Caco-2 (cell line): ENCODE measurements at regions of chr16 and their contacts with region 1.

Region 1: DNA sequence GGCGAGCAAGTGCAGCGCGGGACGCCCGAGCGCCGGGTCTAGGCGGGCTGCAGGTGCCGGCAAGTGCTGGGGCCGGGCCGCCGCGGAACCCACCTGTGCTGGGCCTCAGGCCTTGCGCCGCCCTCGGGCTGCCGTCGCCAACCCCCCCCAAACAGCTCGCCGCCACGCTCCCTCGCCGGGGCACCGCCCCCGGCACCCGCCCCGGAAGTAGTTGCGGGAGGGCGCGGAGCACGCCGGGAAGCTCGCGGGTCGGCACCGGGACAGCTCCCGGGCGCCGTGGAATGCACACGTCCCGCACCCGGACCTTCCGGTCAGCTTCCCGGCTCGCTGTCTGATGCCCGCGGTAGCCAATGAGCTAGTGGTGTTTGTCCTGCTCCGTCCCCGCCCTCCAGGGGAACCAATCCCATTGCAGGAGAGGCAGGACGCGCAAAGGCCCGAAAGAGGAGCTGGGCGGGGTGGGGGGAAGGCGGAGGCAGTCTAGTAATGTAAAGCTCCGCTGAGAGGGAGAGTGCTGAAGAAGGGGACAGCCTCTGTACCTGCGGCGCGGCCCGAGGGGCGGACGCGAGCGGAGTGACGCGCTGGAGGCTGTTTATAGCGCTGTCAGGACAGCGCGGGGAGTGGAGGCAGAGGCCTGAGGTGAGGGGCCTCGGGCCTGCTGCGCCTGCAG is at the starts of genes ANKS3 and DNAAF8:
- DNase-seq: peak; percentile 96 to 98
- H3K4me3 ChIP-seq: peak within 1 kb of the TSS; percentile 85
- H3K4me3 Mint-ChIP-seq: peak within 1 kb of the TSS; percentile 97
- H3K27ac Mint-ChIP-seq: peak within 1 kb of the TSS; percentile 99
- H3K4me1 ChIP-seq: peaks cover 4% of the 10 kb centered on the region; the same call in 1 of the 2 replicates
- H3K4me1 Mint-ChIP-seq: no peaks in the 10 kb centered on the region
- H3K27me3 ChIP-seq: no peaks in the 10 kb centered on the region
- H3K27me3 Mint-ChIP-seq: no peaks in the 10 kb centered on the region
- CTCF ChIP-seq: no peak
- total RNA-seq, gene ANKS3: 27.4 and 28.1 TPM in 2 replicates
- total RNA-seq, gene DNAAF8: 0.54 TPM in 1 of 2 replicates, not detected in the other

Region 2: DNA sequence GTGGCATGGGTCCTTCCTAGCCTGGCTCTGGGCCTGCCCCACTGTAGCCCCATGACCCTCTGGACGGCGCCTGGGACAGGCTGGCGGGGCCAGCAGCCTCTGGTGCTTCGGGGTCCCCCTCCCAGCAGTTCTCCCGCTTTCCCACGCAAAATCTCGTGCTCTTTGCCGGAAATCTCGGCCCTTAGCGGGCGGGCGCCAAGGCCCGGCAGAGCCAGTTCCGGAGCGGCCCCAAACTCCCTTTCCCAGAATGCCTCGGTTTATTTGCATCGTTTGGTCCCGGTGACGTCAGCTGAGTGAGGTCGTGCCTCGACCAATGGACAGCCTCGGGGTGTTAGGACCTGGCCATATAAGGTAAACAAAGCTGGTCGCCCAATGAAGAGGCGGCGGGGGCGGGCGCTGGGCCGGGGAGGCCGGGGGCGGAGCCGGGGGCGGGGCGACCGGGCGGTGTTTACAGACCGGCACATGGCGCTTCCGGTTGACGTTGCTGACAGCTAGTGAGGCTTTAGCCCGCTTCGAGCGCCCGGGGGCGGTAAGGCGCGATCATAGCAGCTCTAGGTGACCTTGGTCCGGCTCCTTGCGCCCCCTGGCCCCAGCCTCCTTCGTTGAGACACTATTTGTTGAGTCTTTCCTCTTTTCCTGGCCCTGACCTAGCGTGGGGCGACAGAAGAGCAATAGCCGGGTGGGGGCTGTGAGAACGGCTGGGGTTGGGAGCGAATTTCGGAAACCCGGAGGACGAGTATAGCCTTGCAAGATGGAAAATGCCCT is 118.0 kb before region 1 on chr16:
- CTCF ChIA-PET with region 1: interaction called, 6 read pairs
- POLR2A ChIA-PET with region 1: interaction called, 12 read pairs
- intact Hi-C with region 1: no loop called
- DNase-seq: peak; percentile 98 to 100
- H3K4me3 ChIP-seq: peak overlapping the region; percentile 42
- H3K4me3 Mint-ChIP-seq: peak overlapping the region; percentile 94
- H3K27ac Mint-ChIP-seq: peak overlapping the region; percentile 100
- H3K4me1 ChIP-seq: peaks cover 42% of the 10 kb centered on the region
- H3K4me1 Mint-ChIP-seq: peaks cover 7% of the 10 kb centered on the region
- H3K27me3 ChIP-seq: no peaks in the 10 kb centered on the region
- H3K27me3 Mint-ChIP-seq: no peaks in the 10 kb centered on the region
- CTCF ChIP-seq: peak; percentile 33 to 63

Region 3: GRCh38 chr16:4693296-4693955 is 40.8 kb before region 1 on chr16 and contains the start of gene NUDT16L1:
- CTCF ChIA-PET with region 1: interaction called, 3 read pairs
- POLR2A ChIA-PET with region 1: interaction called, 11 read pairs
- intact Hi-C with region 1: no loop called
- DNase-seq: peak; percentile 92 to 97
- H3K4me3 ChIP-seq: peak within 1 kb of the TSS; percentile 100
- H3K4me3 Mint-ChIP-seq: peak within 1 kb of the TSS; percentile 76
- H3K27ac Mint-ChIP-seq: peak within 1 kb of the TSS; percentile 63
- H3K4me1 ChIP-seq: 0 out of 2 replicates have a peak, but pooled peaks cover 6% of the 10 kb centered on the region
- H3K4me1 Mint-ChIP-seq: no peaks in the 10 kb centered on the region
- H3K27me3 ChIP-seq: no peaks in the 10 kb centered on the region
- H3K27me3 Mint-ChIP-seq: no peaks in the 10 kb centered on the region
- CTCF ChIP-seq: no peak
- total RNA-seq, gene NUDT16L1: 27.9 and 31.3 TPM in 2 replicates

Region 4: GRCh38 chr16:4802659-4803287 is 68.6 kb after region 1 on chr16:
- CTCF ChIA-PET with region 1: no interaction called
- POLR2A ChIA-PET with region 1: interaction called, 3 read pairs
- intact Hi-C with region 1: loop called (anchors 2 kb)
- DNase-seq: peak; percentile 94
- H3K4me3 ChIP-seq: peak overlapping the region; percentile 74
- H3K4me3 Mint-ChIP-seq: peak overlapping the region; percentile 77
- H3K27ac Mint-ChIP-seq: peak overlapping the region; percentile 48
- H3K4me1 ChIP-seq: peaks cover 9% of the 10 kb centered on the region; the same call in 1 of the 2 replicates
- H3K4me1 Mint-ChIP-seq: peaks cover 10% of the 10 kb centered on the region
- H3K27me3 ChIP-seq: no peaks in the 10 kb centered on the region
- H3K27me3 Mint-ChIP-seq: no peaks in the 10 kb centered on the region
- CTCF ChIP-seq: no peak